Aorta (tissue), 5 donors: ENCODE measurements at regions of chr10 and their contacts with region 1.

Region 1: GRCh38 chr10:57338823-57339558 is 928.7 kb downstream of the IPMK start:
- DNase-seq: no peak
- ATAC-seq: no peak
- H3K4me3 ChIP-seq: no peak overlapping the region
- H3K27ac ChIP-seq: no peak overlapping the region
- H3K4me1 ChIP-seq: no peaks in the 10 kb centered on the region
- H3K27me3 ChIP-seq: no peaks in the 10 kb centered on the region

Region 2: GRCh38 chr10:57849691-57850357 is 510.8 kb after region 1 on chr10:
- intact Hi-C with region 1: loop called in 1 of 2 experiments (anchors 10 kb)
- DNase-seq: no peak
- ATAC-seq: no peak
- H3K4me3 ChIP-seq: no peak overlapping the region
- H3K27ac ChIP-seq: no peak overlapping the region
- H3K4me1 ChIP-seq: no peaks in the 10 kb centered on the region
- H3K27me3 ChIP-seq: peaks cover 0 to 3% of the 10 kb centered on the region in 2 donors

Region 3: GRCh38 chr10:58064714-58065528 is 725.9 kb after region 1 on chr10:
- intact Hi-C with region 1: loop called (anchors 10 kb)
- DNase-seq: no peak
- ATAC-seq: no peak
- H3K4me3 ChIP-seq: no peak overlapping the region
- H3K27ac ChIP-seq: no peak overlapping the region
- H3K4me1 ChIP-seq: no peaks in the 10 kb centered on the region
- H3K27me3 ChIP-seq: no peaks in the 10 kb centered on the region